ENCODE measurements at regions of chr9 and their contacts with region 1.

Region 1: DNA sequence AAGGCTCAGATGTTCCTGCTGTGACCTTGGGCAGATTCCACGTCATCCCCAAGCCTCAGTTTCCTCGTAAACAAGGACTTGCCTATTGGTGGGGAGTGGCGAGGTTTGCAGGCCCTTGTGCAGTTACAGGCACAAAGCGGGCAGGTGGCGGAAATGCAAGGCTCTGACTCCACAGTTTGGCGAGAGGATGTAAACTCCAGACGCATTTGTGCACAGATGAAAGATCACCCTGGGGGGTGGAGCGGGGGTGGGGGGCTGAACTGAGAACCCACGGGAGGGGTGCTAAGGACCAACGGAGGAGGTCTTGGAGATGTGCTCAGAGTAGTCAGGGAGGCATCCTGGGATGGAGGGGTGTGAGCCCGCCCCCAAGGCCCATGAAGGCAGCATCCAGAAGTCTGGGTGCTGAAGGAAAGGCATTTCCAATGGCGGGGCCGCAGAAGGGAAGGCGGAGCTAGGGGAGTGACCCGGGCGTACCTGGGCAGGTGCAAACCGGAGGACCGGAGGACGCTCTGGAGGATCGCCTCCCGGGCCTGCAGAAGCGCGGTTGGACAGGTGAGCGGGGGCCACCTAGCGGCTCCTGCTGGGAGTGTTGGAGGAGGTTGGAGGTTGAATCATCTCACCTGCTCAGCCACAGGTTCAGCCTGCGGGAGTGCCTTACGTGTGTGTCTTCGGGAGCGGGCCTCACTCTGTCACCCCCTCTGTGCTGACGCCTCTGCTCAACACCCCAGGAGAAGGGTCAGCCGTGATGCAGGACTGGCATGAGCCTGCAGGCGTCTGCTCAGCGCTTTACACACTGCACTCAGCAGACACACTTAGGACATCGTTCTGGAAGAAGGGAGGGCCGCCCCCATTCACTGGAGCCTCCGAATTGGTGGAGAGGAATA is 1.9 kb upstream of the FIBCD1 start:
- DNase-seq: no peak
- ATAC-seq: peak; percentile 91
- H3K4me3 ChIP-seq: no peak overlapping the region
- H3K27ac ChIP-seq: no peak overlapping the region
- H3K4me1 ChIP-seq: no peaks in the 10 kb centered on the region; the same call in 1 of the 2 replicates
- H3K27me3 ChIP-seq: peaks cover 6 to 21% of the 10 kb centered on the region in 2 experiments
- CTCF ChIP-seq: peak; percentile 86 to 96 (median 95)
- EP300 ChIP-seq: no peak
- POLR2A ChIP-seq: no peak
- RAD21 ChIP-seq: peak; percentile 82

Region 2: DNA sequence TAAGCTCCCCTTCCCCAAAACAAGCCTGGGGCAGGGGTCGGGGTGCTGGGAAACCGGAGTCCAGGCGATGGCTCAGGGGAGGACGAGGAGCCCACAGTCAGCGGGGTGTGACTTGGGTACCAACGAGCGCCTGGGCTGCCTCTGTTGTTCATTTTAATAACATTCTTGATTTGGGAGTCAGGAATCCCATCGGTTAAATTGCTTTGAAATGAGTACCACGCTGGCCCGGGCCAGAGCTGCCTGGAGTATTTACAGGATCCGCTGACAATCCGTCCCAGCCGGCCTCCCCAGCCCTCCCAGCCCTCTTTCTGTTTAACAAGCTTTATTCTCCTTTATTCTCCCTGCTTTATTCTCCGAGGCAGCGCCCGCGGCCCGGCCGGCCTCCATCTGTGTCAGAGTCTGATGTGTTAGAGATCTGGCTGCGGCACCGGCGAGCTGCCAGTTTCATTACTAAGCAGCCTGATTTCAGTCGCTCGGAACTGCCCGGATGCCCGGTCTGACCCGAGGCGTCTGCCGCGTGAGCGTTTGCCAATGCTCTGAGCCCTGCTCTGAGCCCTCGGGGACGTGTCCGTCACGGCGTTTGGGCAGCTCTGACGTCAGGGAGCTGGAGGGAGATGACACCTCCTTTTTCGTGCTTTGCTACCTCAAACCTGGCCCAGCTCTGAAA is 27.9 kb before region 1 on chr9:
- CTCF ChIA-PET with region 1: no interaction called
- POLR2A ChIA-PET with region 1: no interaction called
- RAD21 ChIA-PET with region 1: no interaction called
- SMC1A ChIA-PET with region 1: no interaction called
- in situ Hi-C with region 1: no loop called
- intact Hi-C with region 1: no loop called
- DNase-seq: no peak
- ATAC-seq: no peak
- H3K4me3 ChIP-seq: no peak overlapping the region
- H3K27ac ChIP-seq: no peak overlapping the region
- H3K4me1 ChIP-seq: no peaks in the 10 kb centered on the region
- H3K27me3 ChIP-seq: no peaks in the 10 kb centered on the region
- CTCF ChIP-seq: no peak
- EP300 ChIP-seq: no peak
- POLR2A ChIP-seq: no peak
- RAD21 ChIP-seq: no peak

Region 3: GRCh38 chr9:131018621-131019020 is 77.7 kb after region 1 on chr9:
- CTCF ChIA-PET with region 1: no interaction called
- POLR2A ChIA-PET with region 1: no interaction called
- RAD21 ChIA-PET with region 1: no interaction called
- SMC1A ChIA-PET with region 1: no interaction called
- in situ Hi-C with region 1: no loop called
- intact Hi-C with region 1: no loop called
- DNase-seq: no peak
- ATAC-seq: no peak
- H3K4me3 ChIP-seq: no peak overlapping the region
- H3K27ac ChIP-seq: no peak overlapping the region
- H3K4me1 ChIP-seq: no peaks in the 10 kb centered on the region
- H3K27me3 ChIP-seq: no peaks in the 10 kb centered on the region; a peak in 1 of 4 replicates
- CTCF ChIP-seq: no peak
- EP300 ChIP-seq: no peak
- POLR2A ChIP-seq: no peak
- RAD21 ChIP-seq: no peak

Region 4: DNA sequence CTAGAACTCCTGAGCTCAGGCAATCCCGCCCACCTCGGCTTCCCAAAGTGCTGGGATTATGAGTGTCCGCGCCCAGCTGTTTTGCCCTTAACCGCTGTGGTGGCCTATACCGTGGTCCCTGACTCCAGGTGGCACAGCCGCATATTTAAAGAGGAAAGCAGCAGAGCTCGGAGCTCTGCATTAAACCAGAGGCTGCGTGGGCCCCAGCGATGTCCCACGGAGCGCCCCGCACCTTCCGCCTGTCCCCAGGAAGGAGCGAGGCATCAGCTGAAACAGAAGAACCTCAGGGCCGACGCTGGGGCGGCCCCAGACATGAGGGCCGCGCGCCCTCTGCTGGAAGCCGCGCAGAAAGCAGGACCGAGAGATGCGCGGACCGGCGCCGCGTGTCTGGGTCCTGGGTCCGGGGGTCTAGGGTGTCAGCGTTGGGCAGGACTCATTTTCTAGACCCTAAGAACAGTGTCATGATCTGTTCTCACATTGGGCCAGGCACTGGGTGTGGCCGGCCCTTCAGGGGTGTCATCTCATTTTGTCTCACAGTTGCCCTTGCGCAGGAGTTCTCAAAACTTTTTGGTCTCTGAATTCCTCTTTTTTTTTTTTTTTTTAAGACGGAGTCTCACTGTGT is 105.8 kb after region 1 on chr9:
- CTCF ChIA-PET with region 1: interaction called, 3 read pairs
- POLR2A ChIA-PET with region 1: no interaction called
- RAD21 ChIA-PET with region 1: interaction called, 5 read pairs
- SMC1A ChIA-PET with region 1: no interaction called
- in situ Hi-C with region 1: no loop called
- intact Hi-C with region 1: loop called (anchors 10 kb)
- DNase-seq: no peak
- ATAC-seq: peak; percentile 96
- H3K4me3 ChIP-seq: no peak overlapping the region
- H3K27ac ChIP-seq: no peak overlapping the region
- H3K4me1 ChIP-seq: peaks cover 13% of the 10 kb centered on the region
- H3K27me3 ChIP-seq: no peaks in the 10 kb centered on the region
- CTCF ChIP-seq: peak; percentile 92 to 95 (median 92)
- EP300 ChIP-seq: no peak
- POLR2A ChIP-seq: no peak
- RAD21 ChIP-seq: peak; percentile 94